ENCODE measurements at regions of chr19 and their contacts with region 1.

Region 1: DNA sequence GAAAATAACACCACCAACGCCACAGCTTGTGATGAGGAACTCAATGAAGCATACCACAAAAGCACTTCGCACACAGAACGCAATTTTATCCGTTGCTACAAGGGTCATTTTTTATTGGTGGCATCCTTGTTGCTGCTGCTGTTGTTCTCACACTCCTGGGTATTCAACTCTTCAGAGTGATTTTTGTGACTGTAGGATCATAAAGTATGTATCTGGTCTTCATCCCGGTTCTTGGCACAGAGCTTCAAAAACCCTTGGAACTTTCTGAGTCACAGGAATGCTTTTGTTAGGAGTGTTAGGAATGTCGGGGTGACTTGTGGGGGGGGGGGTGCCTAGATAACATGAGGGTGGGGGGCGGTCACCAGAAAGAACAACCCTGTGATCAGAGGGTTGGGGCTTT is 108.4 kb downstream of the ZNF557 start:
- DNase-seq: no peak
- H3K4me3 Mint-ChIP-seq: no peak overlapping the region
- H3K27ac Mint-ChIP-seq: no peak overlapping the region
- H3K4me1 Mint-ChIP-seq: peaks cover 19% of the 10 kb centered on the region
- H3K27me3 Mint-ChIP-seq: no peaks in the 10 kb centered on the region

Region 2: GRCh38 chr19:7191946-7192691 is 14.2 kb after region 1 on chr19:
- CTCF ChIA-PET with region 1: interaction called, 4 read pairs
- intact Hi-C with region 1: loop called (anchors 1 kb)
- DNase-seq: peak; percentile 75
- H3K4me3 Mint-ChIP-seq: no peak overlapping the region
- H3K27ac Mint-ChIP-seq: peak overlapping the region; percentile 2
- H3K4me1 Mint-ChIP-seq: peaks cover 23% of the 10 kb centered on the region
- H3K27me3 Mint-ChIP-seq: peaks cover 6% of the 10 kb centered on the region

Region 3: GRCh38 chr19:7216373-7216902 is 38.5 kb after region 1 on chr19:
- CTCF ChIA-PET with region 1: interaction called, 7 read pairs
- intact Hi-C with region 1: loop called (anchors 1 kb)
- DNase-seq: peak; percentile 75
- H3K4me3 Mint-ChIP-seq: no peak overlapping the region
- H3K27ac Mint-ChIP-seq: peak overlapping the region; percentile 18
- H3K4me1 Mint-ChIP-seq: peaks cover 39% of the 10 kb centered on the region
- H3K27me3 Mint-ChIP-seq: no peaks in the 10 kb centered on the region

Region 4: GRCh38 chr19:7226739-7227138 is 48.8 kb after region 1 on chr19:
- CTCF ChIA-PET with region 1: no interaction called
- intact Hi-C with region 1: no loop called
- DNase-seq: no peak
- H3K4me3 Mint-ChIP-seq: no peak overlapping the region
- H3K27ac Mint-ChIP-seq: no peak overlapping the region
- H3K4me1 Mint-ChIP-seq: peaks cover 8% of the 10 kb centered on the region
- H3K27me3 Mint-ChIP-seq: no peaks in the 10 kb centered on the region

Measured in activated naive CD4-positive, alpha-beta T cell treated with anti-CD3 and anti-CD28 coated beads for 36 hours (primary cell).